ENCODE measurements at regions of chr18 and their contacts with region 1.

Region 1: DNA sequence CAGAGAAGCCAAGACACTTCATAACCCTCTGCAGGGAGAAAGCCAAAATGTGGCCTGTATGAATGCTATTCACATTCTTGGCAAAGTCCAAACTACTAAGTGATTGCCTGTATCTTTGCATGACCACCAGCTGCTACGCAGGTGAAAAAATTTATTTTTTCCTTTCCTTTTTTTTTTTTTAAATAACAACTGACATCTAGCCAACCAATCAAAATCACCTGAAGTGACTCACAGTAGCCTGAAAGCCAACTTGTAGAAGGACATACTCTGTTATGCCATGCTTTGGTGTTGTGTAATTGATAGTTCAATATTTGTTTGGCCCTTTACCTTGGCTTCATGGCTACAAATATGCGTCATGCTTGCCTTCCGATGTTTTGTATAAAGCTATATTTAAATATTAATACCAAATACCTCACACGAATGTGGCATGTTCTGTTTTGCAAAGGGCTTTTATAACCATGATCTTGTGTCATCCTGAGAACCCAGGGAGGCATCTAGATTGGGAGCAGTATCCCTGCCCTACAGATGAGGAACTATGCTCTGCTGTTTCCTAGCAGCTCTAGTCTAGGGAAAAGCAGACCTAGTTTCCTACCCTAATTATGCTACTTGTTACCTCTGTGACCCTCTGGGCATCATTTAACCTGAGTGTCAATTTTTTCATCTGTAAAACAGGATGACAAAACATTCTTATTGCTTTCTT is 102.1 kb downstream of the MYOM1 start:
- DNase-seq: no peak
- ATAC-seq: no peak
- H3K4me3 Mint-ChIP-seq: no peak overlapping the region
- H3K27ac Mint-ChIP-seq: no peak overlapping the region
- H3K4me1 Mint-ChIP-seq: no peaks in the 10 kb centered on the region
- H3K27me3 Mint-ChIP-seq: peaks cover 2% of the 10 kb centered on the region

Region 2: GRCh38 chr18:3104190-3105054 is 13.2 kb before region 1 on chr18:
- CTCF ChIA-PET with region 1: interaction called, 16 read pairs
- POLR2A ChIA-PET with region 1: no interaction called
- DNase-seq: no peak
- ATAC-seq: no peak
- H3K4me3 Mint-ChIP-seq: no peak overlapping the region
- H3K27ac Mint-ChIP-seq: no peak overlapping the region
- H3K4me1 Mint-ChIP-seq: no peaks in the 10 kb centered on the region
- H3K27me3 Mint-ChIP-seq: peaks cover 2% of the 10 kb centered on the region

Region 3: GRCh38 chr18:3329471-3329870 is 211.8 kb after region 1 on chr18:
- CTCF ChIA-PET with region 1: no interaction called
- POLR2A ChIA-PET with region 1: no interaction called
- DNase-seq: no peak
- ATAC-seq: no peak
- H3K4me3 Mint-ChIP-seq: no peak overlapping the region
- H3K27ac Mint-ChIP-seq: no peak overlapping the region
- H3K4me1 Mint-ChIP-seq: no peaks in the 10 kb centered on the region
- H3K27me3 Mint-ChIP-seq: peaks cover 2% of the 10 kb centered on the region